ENCODE measurements at regions of chr5 and their contacts with region 1.

Region 1: DNA sequence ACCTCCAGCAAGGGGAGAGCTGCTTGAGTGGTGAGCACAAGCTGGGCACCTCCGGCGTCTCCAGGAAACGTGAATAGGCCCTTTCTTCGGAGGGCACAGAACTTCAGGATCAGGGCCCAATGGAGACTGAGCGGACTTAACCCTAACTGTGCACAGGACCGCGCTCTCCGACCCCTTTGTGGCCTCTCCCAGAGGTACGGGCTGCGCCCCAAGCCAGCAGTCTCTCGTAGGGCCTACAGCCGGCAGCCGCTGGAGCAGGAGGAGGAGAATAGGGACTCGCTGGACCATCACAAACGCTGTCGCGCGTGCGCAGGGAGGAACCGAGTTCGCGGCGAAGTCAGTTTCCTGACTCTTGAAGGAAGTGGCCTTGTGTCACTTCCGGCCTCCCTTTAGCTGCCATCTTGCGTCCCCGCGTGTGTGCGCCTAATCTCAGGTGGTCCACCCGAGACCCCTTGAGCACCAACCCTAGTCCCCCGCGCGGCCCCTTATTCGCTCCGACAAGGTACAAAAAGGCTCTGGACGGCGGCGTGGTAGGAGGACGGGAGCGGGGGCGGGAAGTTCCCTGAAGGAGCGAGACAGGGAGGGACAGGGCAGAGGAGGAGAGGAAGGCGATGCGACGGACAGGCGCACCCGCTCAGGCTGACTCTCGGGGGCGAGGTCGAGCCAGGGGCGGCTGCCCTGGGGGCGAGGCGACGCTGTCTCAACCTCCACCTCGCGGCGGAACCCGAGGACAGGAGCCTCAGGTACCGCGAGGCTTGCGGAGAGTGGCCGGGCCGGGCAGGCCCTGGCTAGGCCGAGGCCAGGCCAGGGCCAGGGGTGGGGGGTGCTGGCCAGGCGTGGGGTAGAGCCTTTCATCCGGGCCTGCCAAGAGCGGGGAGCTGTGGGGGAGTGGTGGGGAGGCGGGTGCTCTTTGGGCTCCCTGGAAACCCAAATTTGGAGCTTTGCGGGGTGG is at the start of gene BTF3:
- DNase-seq: peak; percentile 92
- H3K4me3 Mint-ChIP-seq: peak within 1 kb of the TSS; percentile 99
- H3K27ac Mint-ChIP-seq: peak within 1 kb of the TSS; percentile 100
- H3K4me1 Mint-ChIP-seq: peaks cover 26% of the 10 kb centered on the region
- H3K27me3 Mint-ChIP-seq: peaks cover 9% of the 10 kb centered on the region
- total RNA-seq, gene BTF3: 967 and 969 TPM in 2 replicates

Region 2: DNA sequence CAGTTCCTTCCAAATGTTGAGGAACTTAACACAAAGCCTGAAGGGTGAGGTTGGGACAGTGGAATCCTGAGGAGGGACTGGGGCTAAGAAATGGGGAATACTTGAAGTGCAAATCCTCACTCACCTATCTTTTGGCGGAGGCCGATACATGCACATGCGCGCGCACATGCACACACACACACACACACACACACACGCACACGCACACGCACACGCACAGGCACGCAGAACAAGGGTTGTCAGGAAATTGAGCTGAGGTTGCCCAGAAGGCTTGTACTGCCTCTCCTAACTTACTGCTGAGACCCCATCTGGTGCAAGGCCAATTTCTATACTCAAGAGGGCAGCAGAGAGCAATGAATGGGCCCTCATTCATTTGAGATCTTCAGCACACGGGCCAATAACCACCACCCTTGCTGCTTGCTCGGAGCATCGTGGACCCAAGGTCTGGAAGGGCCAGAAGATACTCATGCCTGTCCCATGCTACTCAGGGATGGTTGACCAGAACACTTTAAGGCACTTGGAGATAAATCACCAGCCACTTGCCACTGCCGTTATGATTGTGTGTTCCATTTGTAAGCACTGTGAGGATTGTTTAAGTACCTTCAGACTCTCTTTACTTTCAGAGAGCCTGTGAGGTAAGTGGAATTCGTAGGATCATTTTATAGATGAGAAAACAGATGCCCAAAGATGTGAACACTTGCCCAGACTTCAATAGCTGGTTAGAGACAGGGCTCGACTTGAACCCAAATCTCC is 21.4 kb after region 1 on chr5:
- intact Hi-C with region 1: loop called (anchors 2 kb)
- DNase-seq: peak; percentile 70
- H3K4me3 Mint-ChIP-seq: peak overlapping the region; percentile 21
- H3K27ac Mint-ChIP-seq: peak overlapping the region; percentile 28
- H3K4me1 Mint-ChIP-seq: peaks cover 8% of the 10 kb centered on the region
- H3K27me3 Mint-ChIP-seq: no peaks in the 10 kb centered on the region

Region 3: GRCh38 chr5:73534971-73535370 is 36.6 kb after region 1 on chr5:
- intact Hi-C with region 1: loop called (anchors 5 kb)
- DNase-seq: no peak
- H3K4me3 Mint-ChIP-seq: no peak overlapping the region
- H3K27ac Mint-ChIP-seq: no peak overlapping the region
- H3K4me1 Mint-ChIP-seq: no peaks in the 10 kb centered on the region
- H3K27me3 Mint-ChIP-seq: peaks cover 28% of the 10 kb centered on the region

Region 4: GRCh38 chr5:73565139-73565968 is 67.0 kb after region 1 on chr5 and contains the starts of genes ANKRA2 and UTP15:
- intact Hi-C with region 1: loop called (anchors 1 kb)
- DNase-seq: peak; percentile 97
- H3K4me3 Mint-ChIP-seq: peak within 1 kb of the TSS; percentile 96
- H3K27ac Mint-ChIP-seq: peak within 1 kb of the TSS; percentile 95
- H3K4me1 Mint-ChIP-seq: peaks cover 25% of the 10 kb centered on the region
- H3K27me3 Mint-ChIP-seq: no peaks in the 10 kb centered on the region
- total RNA-seq, gene ANKRA2: 18.7 and 19.6 TPM in 2 replicates
- total RNA-seq, gene UTP15: 46.0 and 47.0 TPM in 2 replicates

Region 5: DNA sequence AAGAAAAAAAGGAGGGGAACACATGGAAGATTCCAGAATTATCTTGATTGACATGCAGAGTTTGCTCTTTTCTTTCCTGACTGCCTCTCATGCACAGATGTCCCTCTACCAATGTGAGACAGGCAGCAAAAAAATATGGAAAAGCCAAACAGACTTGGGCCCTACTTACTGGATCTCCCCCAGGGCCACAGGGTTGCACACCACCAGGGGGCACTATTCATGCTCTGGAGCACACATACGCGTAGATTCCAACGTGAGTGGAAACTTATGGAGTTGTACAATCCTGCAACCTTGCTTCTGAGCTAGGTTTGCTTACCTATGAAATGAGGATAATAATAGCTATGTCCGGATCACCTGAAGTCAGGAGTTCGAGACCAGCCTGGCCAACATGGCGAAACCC is 447.2 kb after region 1 on chr5:
- intact Hi-C with region 1: no loop called
- DNase-seq: no peak
- H3K4me3 Mint-ChIP-seq: no peak overlapping the region
- H3K27ac Mint-ChIP-seq: no peak overlapping the region
- H3K4me1 Mint-ChIP-seq: no peaks in the 10 kb centered on the region
- H3K27me3 Mint-ChIP-seq: no peaks in the 10 kb centered on the region

Measured in activated T-helper 2 cell treated with anti-CD3 and anti-CD28 coated beads, Interferon-gamma antibody, Interleukin-2, Interleukin-4, amounts not matched to agents 10 μg/mL and 5 μg/mL and 100 μg/mL, durations not matched to agents 14 hours and 24 hours and 36 hours (primary cell).